K562 (cell line): ENCODE measurements at regions of chrX and their contacts with region 1.

Region 1: DNA sequence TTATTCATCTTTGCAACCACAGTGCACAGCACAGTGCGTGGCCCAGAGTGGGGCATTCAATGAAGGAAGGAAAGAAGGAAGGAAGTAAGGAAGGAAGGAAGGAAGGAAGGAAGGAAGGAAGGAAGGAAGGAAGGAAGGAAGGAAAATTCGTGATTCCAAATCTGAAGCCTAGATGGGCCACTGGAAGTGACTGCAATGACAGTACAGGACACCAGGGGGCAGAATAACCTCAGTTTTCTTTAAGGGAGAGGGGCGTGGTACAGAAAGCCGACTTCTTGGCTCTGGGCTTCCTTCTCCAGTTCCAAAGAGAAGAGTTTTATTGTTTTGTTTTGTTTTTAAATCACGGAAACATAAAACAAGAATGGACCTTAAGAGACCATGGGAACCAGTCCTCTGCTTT is 47.8 kb downstream of the APLN start:
- DNase-seq: peak; percentile 65 to 75 (median 69)
- ATAC-seq: peak; percentile 62
- H3K4me3 ChIP-seq: no peak overlapping the region
- H3K27ac ChIP-seq: no peak overlapping the region
- H3K4me1 ChIP-seq: peaks cover 10 to 15% of the 10 kb centered on the region in 2 experiments; a peak in 4 of 5 replicates
- H3K27me3 ChIP-seq: no peaks in the 10 kb centered on the region
- CTCF ChIP-seq: peak; percentile 76 to 84 (median 77)
- EP300 ChIP-seq: no peak
- POLR2A ChIP-seq: no peak
- RAD21 ChIP-seq: peak; percentile 87 to 89

Region 2: DNA sequence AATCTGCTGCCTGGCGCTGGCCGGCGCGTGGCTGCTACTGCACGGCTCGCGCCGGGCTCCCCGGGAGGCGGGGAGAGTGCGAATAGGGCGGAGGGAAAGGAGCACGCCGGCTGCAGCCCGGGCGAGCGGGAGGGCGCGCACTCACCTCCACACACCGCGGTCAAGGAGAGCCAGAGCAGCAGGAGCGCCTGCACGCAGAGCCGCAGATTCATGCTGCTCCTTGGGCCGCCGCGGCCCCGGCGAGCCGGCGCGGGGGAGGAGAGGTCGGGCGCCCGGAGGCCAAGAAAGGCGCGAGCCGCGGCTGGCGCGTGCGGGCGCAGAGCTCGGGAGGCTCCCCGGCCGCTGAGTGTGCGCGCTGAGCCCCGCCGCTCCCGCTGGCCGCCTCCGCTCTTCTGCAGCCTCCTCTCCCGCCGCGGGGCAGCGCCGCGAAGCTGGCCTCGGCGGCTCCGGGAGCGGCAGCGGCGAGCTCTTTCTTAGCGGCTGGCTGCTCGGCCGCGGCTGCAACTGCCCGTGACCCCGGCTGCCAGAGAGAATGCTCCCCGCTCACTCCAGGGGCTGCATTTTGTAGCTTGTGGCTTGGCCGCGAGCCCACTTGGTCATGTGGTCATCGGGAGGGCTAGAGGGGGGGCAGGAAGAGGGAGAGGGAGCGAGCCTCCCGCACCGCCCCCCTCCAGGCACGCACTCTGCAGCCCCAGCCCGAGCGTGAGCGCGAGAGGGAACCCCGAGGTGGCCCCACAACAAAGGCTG is 47.7 kb after region 1 on chrX and contains the start of gene APLN:
- CTCF ChIA-PET with region 1: no interaction called
- POLR2A ChIA-PET with region 1: no interaction called
- in situ Hi-C with region 1: no loop called
- intact Hi-C with region 1: loop called (anchors 5 kb)
- DNase-seq: peak in 3 of 4 experiments; percentile 26 to 38 (median 37)
- ATAC-seq: peak; percentile 87
- H3K4me3 ChIP-seq: peak within 1 kb of the TSS; percentile 26; the same call in 1 of the 2 replicates
- H3K27ac ChIP-seq: no peak within 1 kb of the TSS
- H3K4me1 ChIP-seq: peaks cover 0 to 17% of the 10 kb centered on the region in 2 experiments; a peak in 2 of 5 replicates
- H3K27me3 ChIP-seq: peaks cover 24 to 65% of the 10 kb centered on the region in 2 experiments
- CTCF ChIP-seq: no peak
- EP300 ChIP-seq: no peak
- POLR2A ChIP-seq: no peak
- RAD21 ChIP-seq: no peak
- polyA plus RNA-seq, gene APLN: not detected

Region 3: DNA sequence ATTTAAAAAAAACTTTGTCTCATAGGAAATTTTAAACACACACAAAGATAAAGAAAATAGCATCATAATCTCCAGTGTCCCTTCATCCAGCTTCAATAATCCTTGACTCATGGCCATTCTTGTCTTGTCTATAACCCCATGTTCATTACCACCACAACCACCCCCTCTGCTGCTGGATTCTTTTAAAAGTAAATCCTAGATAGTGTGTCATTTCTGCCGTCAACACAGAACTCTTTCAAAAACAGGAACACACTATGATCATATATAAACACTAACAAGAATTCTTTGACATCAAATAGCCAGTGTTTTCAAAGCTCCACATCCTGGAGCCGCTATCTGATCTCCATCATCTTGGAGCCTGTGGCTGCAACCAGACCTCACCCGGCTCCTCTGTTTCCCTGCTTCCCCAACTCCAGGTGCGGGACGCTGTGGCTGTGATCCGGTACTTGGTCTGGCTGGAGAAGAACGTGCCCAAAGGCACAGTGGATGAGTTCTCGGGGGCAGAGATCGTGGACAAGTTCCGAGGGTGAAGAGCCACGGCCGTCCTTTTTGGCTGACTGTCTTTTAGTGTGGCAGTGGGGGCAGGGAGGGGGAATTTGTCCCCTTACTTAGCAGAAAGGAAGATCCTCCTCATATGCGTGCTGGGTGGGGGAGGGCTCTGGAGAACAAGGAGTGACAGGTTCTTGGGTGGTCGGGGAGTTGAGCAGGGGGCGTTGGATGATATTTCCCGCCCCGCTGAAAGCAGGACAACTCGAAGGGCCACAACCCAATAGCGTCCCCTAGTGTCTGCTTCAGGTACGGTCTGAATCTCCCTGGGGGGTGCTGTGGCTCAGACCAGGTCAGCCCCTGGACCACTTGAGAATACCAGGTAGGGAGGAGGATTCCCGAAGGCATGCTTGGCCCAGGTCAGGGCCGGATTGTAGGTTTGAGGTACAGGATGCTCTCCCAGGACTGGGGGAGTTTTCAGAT is 147.4 kb after region 1 on chrX:
- CTCF ChIA-PET with region 1: interaction called, 11 read pairs
- POLR2A ChIA-PET with region 1: no interaction called
- in situ Hi-C with region 1: no loop called
- intact Hi-C with region 1: loop called (anchors 1 kb)
- DNase-seq: peak; percentile 49 to 64 (median 56)
- ATAC-seq: peak; percentile 82
- H3K4me3 ChIP-seq: no peak overlapping the region
- H3K27ac ChIP-seq: no peak overlapping the region
- H3K4me1 ChIP-seq: peaks cover 6 to 8% of the 10 kb centered on the region in 2 experiments; a peak in 4 of 5 replicates
- H3K27me3 ChIP-seq: no peaks in the 10 kb centered on the region
- CTCF ChIP-seq: peak; percentile 75 to 84 (median 78)
- EP300 ChIP-seq: no peak
- POLR2A ChIP-seq: no peak
- RAD21 ChIP-seq: peak; percentile 66 to 72

Region 4: GRCh38 chrX:129905787-129906580 is 299.1 kb after region 1 on chrX and contains the start of gene UTP14A:
- CTCF ChIA-PET with region 1: no interaction called
- POLR2A ChIA-PET with region 1: no interaction called
- in situ Hi-C with region 1: loop called (anchors 10 kb)
- intact Hi-C with region 1: no loop called
- DNase-seq: peak; percentile 86 to 96 (median 89)
- ATAC-seq: peak; percentile 99
- H3K4me3 ChIP-seq: peak within 1 kb of the TSS; percentile 94
- H3K27ac ChIP-seq: peak within 1 kb of the TSS; percentile 89
- H3K4me1 ChIP-seq: peaks cover 0 to 6% of the 10 kb centered on the region in 2 experiments; a peak in 3 of 5 replicates
- H3K27me3 ChIP-seq: no peaks in the 10 kb centered on the region
- CTCF ChIP-seq: no peak
- EP300 ChIP-seq: 0 out of 2 replicates have a peak, but pooled peaks have one; percentile 13
- POLR2A ChIP-seq: peak; percentile 92
- RAD21 ChIP-seq: no peak
- polyA plus RNA-seq, gene UTP14A: 30.5 to 59.9 TPM

Region 5: DNA sequence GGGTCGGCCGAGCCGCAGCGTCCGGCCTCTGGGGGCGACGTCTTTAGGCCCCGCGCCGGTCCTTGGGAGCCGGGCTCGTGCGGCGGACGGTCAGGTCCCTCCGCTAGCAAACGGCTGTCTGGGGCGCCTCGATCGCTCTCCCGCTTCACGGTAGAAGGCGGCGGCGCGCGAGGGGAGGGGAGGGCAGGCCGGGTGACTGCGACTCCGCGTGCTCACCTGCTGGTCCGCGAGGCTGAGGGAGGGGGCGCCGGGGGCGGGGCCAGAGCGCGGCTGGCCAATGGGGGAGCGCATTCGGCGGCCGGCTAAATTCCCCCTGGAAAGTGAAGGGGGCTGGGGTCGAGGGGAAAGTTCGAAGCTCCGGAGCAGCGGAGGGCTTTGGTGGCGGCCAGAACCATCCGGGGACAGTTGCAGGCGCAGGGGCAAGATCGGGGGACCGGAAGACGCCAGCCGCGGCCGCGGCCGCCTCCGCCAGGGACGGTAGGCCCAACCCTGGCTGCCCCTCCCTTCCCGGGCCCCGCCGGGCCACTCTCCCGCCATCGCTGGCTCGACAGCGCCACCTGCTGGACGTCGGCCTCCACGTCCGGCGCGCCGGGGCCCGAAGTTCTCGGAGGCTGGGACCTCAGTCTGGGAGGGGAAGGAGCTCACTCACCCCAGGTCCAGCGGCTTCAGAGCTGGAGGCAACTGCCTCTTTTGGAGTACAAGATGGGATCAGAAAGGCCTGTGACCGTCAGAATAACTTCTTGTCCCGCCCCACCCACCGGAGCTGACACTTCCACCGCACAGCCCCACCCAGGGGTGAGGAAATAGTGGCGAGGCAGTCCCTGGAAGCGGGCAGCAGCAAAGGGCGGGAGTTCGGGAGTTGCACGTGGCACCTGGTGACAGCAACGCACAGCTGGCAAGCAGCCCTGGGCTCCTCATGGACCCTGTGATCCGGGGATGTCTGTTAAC is 453.5 kb after region 1 on chrX:
- CTCF ChIA-PET with region 1: interaction called, 5 read pairs
- POLR2A ChIA-PET with region 1: interaction called, 3 read pairs
- in situ Hi-C with region 1: loop called (anchors 10 kb)
- intact Hi-C with region 1: loop called (anchors 2 kb)
- DNase-seq: peak; percentile 89 to 93 (median 92)
- ATAC-seq: peak; percentile 94
- H3K4me3 ChIP-seq: peak overlapping the region; percentile 42
- H3K27ac ChIP-seq: peak overlapping the region; percentile 87
- H3K4me1 ChIP-seq: peaks cover 2 to 23% of the 10 kb centered on the region in 2 experiments; a peak in 4 of 5 replicates
- H3K27me3 ChIP-seq: no peaks in the 10 kb centered on the region
- CTCF ChIP-seq: peak; percentile 86 to 90 (median 89)
- EP300 ChIP-seq: no peak
- POLR2A ChIP-seq: no peak; the same call in 1 of the 2 replicates
- RAD21 ChIP-seq: peak; percentile 91 to 92